Activated CD4-positive, alpha-beta memory T cell treated with anti-CD3 and anti-CD28 coated beads, Interleukin-2, amount 10 ng/mL, durations not matched to agents 7 days and 5 days (primary cell): ENCODE measurements at regions of chr19 and their contacts with region 1.

Region 1: GRCh38 chr19:7680606-7681339 is at the start of gene TRAPPC5:
- DNase-seq: peak; percentile 89
- H3K4me3 Mint-ChIP-seq: peak within 1 kb of the TSS; percentile 88
- H3K27ac Mint-ChIP-seq: peak within 1 kb of the TSS; percentile 84
- H3K4me1 Mint-ChIP-seq: peaks cover 44% of the 10 kb centered on the region
- H3K27me3 Mint-ChIP-seq: peaks cover 29% of the 10 kb centered on the region
- total RNA-seq, gene TRAPPC5: 92.5 to 94.7 TPM

Region 2: GRCh38 chr19:7550987-7551761 is 129.6 kb before region 1 on chr19:
- CTCF ChIA-PET with region 1: no interaction called
- POLR2A ChIA-PET with region 1: no interaction called
- DNase-seq: no peak
- H3K4me3 Mint-ChIP-seq: no peak overlapping the region
- H3K27ac Mint-ChIP-seq: no peak overlapping the region
- H3K4me1 Mint-ChIP-seq: peaks cover 14% of the 10 kb centered on the region
- H3K27me3 Mint-ChIP-seq: no peaks in the 10 kb centered on the region

Region 3: GRCh38 chr19:7629347-7630054 is 51.3 kb before region 1 on chr19 and contains the starts of genes PET100 and XAB2:
- CTCF ChIA-PET with region 1: interaction called, 14 read pairs
- POLR2A ChIA-PET with region 1: interaction called, 8 read pairs
- DNase-seq: peak; percentile 96
- H3K4me3 Mint-ChIP-seq: peak within 1 kb of the TSS; percentile 99
- H3K27ac Mint-ChIP-seq: peak within 1 kb of the TSS; percentile 99
- H3K4me1 Mint-ChIP-seq: peaks cover 37% of the 10 kb centered on the region
- H3K27me3 Mint-ChIP-seq: no peaks in the 10 kb centered on the region
- total RNA-seq, gene PET100: 123 to 136 TPM
- total RNA-seq, gene XAB2: 48.5 TPM

Region 4: DNA sequence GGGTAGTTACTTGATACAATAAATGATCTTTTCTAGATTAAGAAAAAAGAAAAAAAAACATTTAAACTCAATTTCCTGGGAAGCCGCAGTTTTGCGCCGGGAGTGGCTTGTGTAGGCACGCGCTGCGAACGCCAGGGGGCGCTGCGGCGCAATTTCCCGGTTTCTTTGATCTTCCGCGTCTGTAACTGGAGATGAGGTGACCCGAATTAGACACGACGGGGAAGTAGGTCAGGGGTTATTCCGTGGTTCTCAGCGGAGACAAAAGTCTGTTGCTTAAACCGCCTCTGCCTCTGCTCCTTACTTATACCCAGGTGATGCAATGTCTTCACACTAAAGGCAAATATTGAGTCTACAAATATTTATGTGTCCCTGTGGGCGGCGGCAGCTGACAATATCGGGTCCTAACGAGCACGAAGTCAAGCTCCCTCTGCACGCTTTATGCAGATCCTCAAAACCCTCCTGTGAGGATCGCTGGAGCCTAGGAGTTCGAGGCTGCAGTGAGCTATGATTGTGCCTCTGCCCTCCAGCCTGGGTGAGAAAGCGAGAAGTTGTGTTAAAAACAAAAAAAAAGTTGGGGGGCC is 28.6 kb before region 1 on chr19:
- CTCF ChIA-PET with region 1: interaction called, 16 read pairs
- POLR2A ChIA-PET with region 1: interaction called, 5 read pairs
- DNase-seq: peak; percentile 88
- H3K4me3 Mint-ChIP-seq: peak overlapping the region; percentile 53
- H3K27ac Mint-ChIP-seq: peak overlapping the region; percentile 41
- H3K4me1 Mint-ChIP-seq: peaks cover 12% of the 10 kb centered on the region
- H3K27me3 Mint-ChIP-seq: no peaks in the 10 kb centered on the region

Region 5: DNA sequence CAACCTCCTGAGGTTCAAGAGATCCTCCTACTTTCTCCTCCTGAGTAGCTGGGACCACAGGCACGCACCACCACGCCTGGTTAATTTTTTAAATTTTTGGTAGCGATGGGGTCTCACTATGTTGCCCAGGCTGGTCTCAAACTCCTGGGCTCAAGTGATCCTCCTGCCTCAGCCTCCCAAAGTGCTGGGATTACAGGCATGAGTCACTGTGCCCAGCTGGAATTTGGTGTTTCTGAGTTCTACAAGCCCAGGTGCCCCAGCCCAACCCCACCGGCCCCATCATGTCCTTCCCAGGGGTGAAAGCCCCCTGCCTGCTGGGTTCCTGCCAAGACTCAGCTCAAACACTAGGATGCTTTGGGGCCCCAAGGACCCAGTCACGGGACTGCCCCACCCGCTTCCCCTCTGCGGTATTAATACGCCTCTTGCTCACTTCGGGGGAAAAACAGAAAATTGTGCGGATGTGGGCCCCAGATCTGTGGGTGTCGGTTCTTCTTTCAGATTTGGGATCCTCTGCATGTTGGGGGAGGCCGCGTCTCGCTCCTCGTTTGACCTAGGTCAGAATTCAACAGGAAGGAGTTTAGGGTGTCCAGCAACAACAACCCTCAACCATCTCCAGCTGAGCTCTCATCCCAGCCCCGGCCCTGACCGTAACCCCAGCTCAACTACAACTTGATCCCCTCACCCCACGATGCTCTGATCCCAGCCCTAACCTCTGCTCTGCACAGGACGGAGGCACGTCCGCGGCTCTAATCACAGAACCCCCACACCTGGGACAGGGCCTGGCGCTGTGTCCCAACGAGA is 24.8 kb after region 1 on chr19:
- CTCF ChIA-PET with region 1: interaction called, 11 read pairs
- POLR2A ChIA-PET with region 1: interaction called, 15 read pairs
- DNase-seq: peak; percentile 80
- H3K4me3 Mint-ChIP-seq: peak overlapping the region; percentile 31
- H3K27ac Mint-ChIP-seq: peak overlapping the region; percentile 90
- H3K4me1 Mint-ChIP-seq: peaks cover 30% of the 10 kb centered on the region
- H3K27me3 Mint-ChIP-seq: peaks cover 18% of the 10 kb centered on the region

Region 6: GRCh38 chr19:7757358-7757757 is 76.6 kb after region 1 on chr19:
- CTCF ChIA-PET with region 1: no interaction called
- POLR2A ChIA-PET with region 1: no interaction called
- DNase-seq: no peak
- H3K4me3 Mint-ChIP-seq: no peak overlapping the region
- H3K27ac Mint-ChIP-seq: no peak overlapping the region
- H3K4me1 Mint-ChIP-seq: no peaks in the 10 kb centered on the region
- H3K27me3 Mint-ChIP-seq: peaks cover 21% of the 10 kb centered on the region